Activated CD4-positive, alpha-beta memory T cell treated with anti-CD3 and anti-CD28 coated beads, Interleukin-2, amount 10 ng/mL, durations not matched to agents 7 days and 5 days (primary cell): ENCODE measurements at regions of chr14 and their contacts with region 1.

Region 1: GRCh38 chr14:21014761-21015190 is 10.1 kb downstream of the NDRG2 start:
- DNase-seq: peak; percentile 79
- H3K4me3 Mint-ChIP-seq: no peak overlapping the region
- H3K27ac Mint-ChIP-seq: no peak overlapping the region
- H3K4me1 Mint-ChIP-seq: no peaks in the 10 kb centered on the region
- H3K27me3 Mint-ChIP-seq: peaks cover 19% of the 10 kb centered on the region

Region 2: GRCh38 chr14:20836668-20837338 is 178.0 kb before region 1 on chr14:
- CTCF ChIA-PET with region 1: no interaction called
- POLR2A ChIA-PET with region 1: no interaction called
- DNase-seq: no peak
- H3K4me3 Mint-ChIP-seq: no peak overlapping the region
- H3K27ac Mint-ChIP-seq: no peak overlapping the region
- H3K4me1 Mint-ChIP-seq: no peaks in the 10 kb centered on the region
- H3K27me3 Mint-ChIP-seq: no peaks in the 10 kb centered on the region

Region 3: GRCh38 chr14:20848316-20848954 is 166.3 kb before region 1 on chr14:
- CTCF ChIA-PET with region 1: no interaction called
- POLR2A ChIA-PET with region 1: no interaction called
- DNase-seq: no peak
- H3K4me3 Mint-ChIP-seq: no peak overlapping the region
- H3K27ac Mint-ChIP-seq: no peak overlapping the region
- H3K4me1 Mint-ChIP-seq: no peaks in the 10 kb centered on the region
- H3K27me3 Mint-ChIP-seq: peaks cover 15% of the 10 kb centered on the region

Region 4: GRCh38 chr14:20934148-20934762 is 80.5 kb before region 1 on chr14:
- CTCF ChIA-PET with region 1: no interaction called
- POLR2A ChIA-PET with region 1: no interaction called
- DNase-seq: peak; percentile 27
- H3K4me3 Mint-ChIP-seq: no peak overlapping the region
- H3K27ac Mint-ChIP-seq: no peak overlapping the region
- H3K4me1 Mint-ChIP-seq: no peaks in the 10 kb centered on the region
- H3K27me3 Mint-ChIP-seq: peaks cover 16% of the 10 kb centered on the region

Region 5: DNA sequence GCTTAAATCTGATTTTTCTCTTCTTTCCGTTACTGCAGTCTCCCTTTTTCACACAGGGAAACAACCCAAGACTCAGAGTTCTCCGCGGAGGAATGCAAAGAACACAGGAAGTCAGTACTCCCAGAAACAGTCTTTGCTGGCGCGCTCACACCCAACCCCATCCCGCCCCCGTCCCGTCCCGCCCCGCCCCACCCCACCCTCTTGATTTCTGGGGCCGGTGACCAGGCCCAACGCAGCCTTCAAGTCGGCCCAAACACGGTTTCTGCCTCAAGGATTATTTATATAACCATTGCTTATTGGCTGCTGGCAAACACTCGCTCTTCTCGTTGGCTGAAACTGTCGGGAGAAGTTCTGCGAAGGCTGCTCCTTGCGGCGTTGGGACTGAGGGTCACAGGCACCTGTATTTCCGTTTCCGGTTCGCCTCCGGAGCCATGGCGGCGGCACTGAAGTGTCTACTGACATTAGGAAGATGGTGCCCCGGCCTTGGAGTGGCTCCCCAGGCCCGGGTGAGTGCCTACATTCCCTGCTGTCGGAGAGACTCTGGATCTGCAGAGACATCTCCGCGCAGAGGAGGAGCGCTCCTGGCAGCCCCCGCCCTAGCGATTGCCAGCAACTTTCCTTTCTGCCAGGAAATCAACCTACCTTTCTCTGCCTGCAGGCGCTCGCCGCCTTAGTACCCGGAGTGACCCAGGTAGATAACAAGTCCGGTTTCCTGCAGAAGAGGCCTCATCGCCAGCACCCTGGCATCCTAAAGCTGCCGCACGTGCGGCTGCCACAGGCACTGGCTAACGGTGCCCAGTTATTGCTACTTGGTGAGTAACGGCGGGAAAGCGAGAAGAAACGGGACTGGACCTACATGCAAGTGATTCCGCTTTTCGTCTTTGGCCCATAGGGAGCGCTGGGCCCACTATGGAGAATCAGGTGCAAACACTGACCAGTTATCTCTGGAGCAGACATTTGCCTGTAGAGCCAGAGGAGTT is 24.9 kb before region 1 on chr14 and contains the start of gene METTL17:
- CTCF ChIA-PET with region 1: interaction called, 19 read pairs
- POLR2A ChIA-PET with region 1: no interaction called
- DNase-seq: peak; percentile 90
- H3K4me3 Mint-ChIP-seq: peak within 1 kb of the TSS; percentile 93
- H3K27ac Mint-ChIP-seq: peak within 1 kb of the TSS; percentile 81
- H3K4me1 Mint-ChIP-seq: peaks cover 56% of the 10 kb centered on the region
- H3K27me3 Mint-ChIP-seq: no peaks in the 10 kb centered on the region
- total RNA-seq, gene METTL17: 81.9 to 82.0 TPM

Region 6: DNA sequence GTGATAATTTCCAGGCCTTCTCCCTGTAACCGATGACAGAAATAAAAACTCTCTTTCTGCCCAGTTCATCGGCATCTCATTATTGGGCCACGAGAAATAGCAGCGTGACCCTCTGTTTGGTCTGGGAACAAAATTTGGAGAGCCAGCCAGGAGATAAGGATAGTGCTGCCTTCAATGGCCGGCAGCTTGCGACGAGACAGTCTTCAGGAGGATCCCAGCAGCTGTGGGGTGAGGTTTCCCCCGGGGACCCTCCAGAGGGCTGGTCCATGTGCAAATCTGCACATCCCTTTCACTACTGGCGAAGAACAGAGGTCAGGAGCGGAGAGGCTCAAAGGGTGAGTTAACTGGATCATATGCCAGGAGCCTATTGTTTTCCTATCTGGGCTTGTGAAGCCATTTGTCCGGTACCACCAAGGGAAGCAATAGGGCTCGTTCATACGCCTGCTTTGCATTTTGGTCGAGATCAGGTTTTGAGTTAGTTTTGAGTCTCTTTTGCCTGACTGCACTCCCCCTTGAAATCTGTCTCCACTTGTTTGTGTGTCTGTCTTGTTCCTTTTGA is 10.9 kb before region 1 on chr14:
- CTCF ChIA-PET with region 1: interaction called, 61 read pairs
- POLR2A ChIA-PET with region 1: interaction called, 4 read pairs
- DNase-seq: no peak
- H3K4me3 Mint-ChIP-seq: no peak overlapping the region
- H3K27ac Mint-ChIP-seq: no peak overlapping the region
- H3K4me1 Mint-ChIP-seq: peaks cover 2% of the 10 kb centered on the region
- H3K27me3 Mint-ChIP-seq: no peaks in the 10 kb centered on the region

Region 7: DNA sequence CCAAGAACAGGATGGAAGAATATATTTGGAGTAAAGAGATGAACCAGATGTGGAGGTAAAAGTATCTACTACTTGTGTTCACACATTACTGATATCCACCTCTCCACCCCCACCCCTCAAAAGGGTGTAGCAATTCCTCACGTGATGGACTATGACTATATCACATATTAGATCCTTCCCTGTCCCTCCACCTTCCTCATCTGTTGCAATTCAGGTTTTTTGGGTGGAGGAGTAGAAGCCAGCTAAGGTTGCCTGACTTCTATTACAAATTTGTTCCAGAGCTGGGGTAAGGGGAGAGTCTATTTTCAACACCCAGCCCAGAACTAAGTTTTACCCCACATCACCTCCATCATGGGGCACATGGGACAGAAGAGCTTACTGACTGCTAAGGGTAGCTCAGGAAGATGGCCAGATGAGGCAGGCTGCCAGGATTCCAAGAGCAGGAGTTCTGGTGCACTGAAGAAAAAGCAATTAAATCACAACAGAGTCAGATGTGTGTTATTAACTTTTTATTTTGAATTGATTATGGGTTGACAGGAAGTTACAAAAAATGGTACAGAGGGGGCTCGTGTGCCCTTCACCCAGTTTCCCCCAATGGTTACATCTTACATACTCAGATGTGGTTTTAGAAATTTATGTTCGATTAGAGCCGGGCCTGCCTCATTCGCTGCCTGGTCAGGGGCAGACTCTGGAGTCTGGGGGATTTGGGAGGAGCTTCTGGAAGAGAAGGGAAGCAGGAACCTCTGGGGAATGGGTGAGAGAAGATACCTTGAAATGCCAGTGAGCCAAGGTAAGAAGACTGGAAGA is 17.8 kb after region 1 on chr14:
- CTCF ChIA-PET with region 1: interaction called, 19 read pairs
- POLR2A ChIA-PET with region 1: interaction called, 4 read pairs
- DNase-seq: no peak
- H3K4me3 Mint-ChIP-seq: no peak overlapping the region
- H3K27ac Mint-ChIP-seq: no peak overlapping the region
- H3K4me1 Mint-ChIP-seq: no peaks in the 10 kb centered on the region
- H3K27me3 Mint-ChIP-seq: peaks cover 3% of the 10 kb centered on the region

Region 8: GRCh38 chr14:21047378-21047781 is 32.6 kb after region 1 on chr14:
- CTCF ChIA-PET with region 1: interaction called, 20 read pairs
- POLR2A ChIA-PET with region 1: no interaction called
- DNase-seq: no peak
- H3K4me3 Mint-ChIP-seq: no peak overlapping the region
- H3K27ac Mint-ChIP-seq: no peak overlapping the region
- H3K4me1 Mint-ChIP-seq: peaks cover 7% of the 10 kb centered on the region
- H3K27me3 Mint-ChIP-seq: peaks cover 17% of the 10 kb centered on the region

Region 9: GRCh38 chr14:21071225-21072030 is 56.7 kb after region 1 on chr14:
- CTCF ChIA-PET with region 1: interaction called, 15 read pairs
- POLR2A ChIA-PET with region 1: interaction called, 4 read pairs
- DNase-seq: peak; percentile 66
- H3K4me3 Mint-ChIP-seq: peak overlapping the region; percentile 65
- H3K27ac Mint-ChIP-seq: no peak overlapping the region
- H3K4me1 Mint-ChIP-seq: peaks cover 39% of the 10 kb centered on the region
- H3K27me3 Mint-ChIP-seq: peaks cover 67% of the 10 kb centered on the region

Region 10: DNA sequence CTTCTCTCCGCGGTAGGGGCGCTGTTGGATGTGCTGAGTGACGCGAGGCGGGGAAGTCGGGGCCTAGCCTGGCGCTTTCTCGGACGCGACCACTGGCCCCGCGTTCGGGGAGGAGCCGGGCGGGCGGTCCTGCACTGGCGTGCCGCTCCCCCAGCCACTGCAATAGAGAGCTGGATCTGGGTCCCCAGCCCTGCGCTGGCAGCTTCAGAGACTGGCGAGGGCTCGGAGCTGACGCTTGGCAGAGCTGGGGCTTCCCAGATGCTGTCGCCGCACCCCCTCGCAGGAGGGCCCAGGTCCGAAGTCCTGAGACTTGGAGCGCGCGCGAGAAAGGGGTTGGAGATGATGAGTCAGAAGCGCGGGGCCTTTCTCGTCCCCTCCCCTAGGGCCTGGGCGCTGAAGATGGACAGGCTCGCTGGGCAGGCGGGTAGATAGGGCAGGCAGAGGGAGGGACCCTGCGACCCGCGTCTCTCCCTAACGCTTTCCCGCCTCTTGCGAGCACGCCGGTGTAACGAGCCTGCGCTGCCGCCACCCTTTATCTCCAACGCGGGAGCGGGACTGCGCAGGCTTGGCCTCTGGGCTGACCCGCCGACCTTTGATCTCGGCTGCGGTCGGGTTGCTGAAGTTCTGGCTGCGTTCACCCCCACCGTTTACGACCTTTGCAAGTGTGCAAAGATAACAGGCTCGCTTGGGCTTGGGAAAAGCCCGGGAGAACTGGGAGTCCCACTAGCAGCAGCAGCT is 89.1 kb after region 1 on chr14:
- CTCF ChIA-PET with region 1: interaction called, 137 read pairs
- POLR2A ChIA-PET with region 1: interaction called, 23 read pairs
- DNase-seq: peak; percentile 96
- H3K4me3 Mint-ChIP-seq: peak overlapping the region; percentile 88
- H3K27ac Mint-ChIP-seq: peak overlapping the region; percentile 78
- H3K4me1 Mint-ChIP-seq: peaks cover 50% of the 10 kb centered on the region
- H3K27me3 Mint-ChIP-seq: peaks cover 10% of the 10 kb centered on the region